ENCODE measurements at regions of chr14 and their contacts with region 1.

Region 1: GRCh38 chr14:98957211-98958047 is 314.6 kb downstream of the BCL11B start:
- DNase-seq: peak; percentile 59 to 92
- H3K4me3 ChIP-seq: no peak overlapping the region
- H3K27ac ChIP-seq: peak overlapping the region; percentile 19 to 29
- H3K4me1 ChIP-seq: peaks cover 0 to 3% of the 10 kb centered on the region in 2 donors
- H3K27me3 ChIP-seq: no peaks in the 10 kb centered on the region
- CTCF ChIP-seq: no peak

Region 2: GRCh38 chr14:98919434-98919833 is 38.0 kb before region 1 on chr14:
- intact Hi-C with region 1: no loop called
- DNase-seq: no peak
- H3K4me3 ChIP-seq: no peak overlapping the region
- H3K27ac ChIP-seq: no peak overlapping the region
- H3K4me1 ChIP-seq: no peaks in the 10 kb centered on the region
- H3K27me3 ChIP-seq: no peaks in the 10 kb centered on the region
- CTCF ChIP-seq: no peak

Region 3: GRCh38 chr14:99155173-99156089 is 198.0 kb after region 1 on chr14:
- intact Hi-C with region 1: loop called (anchors 5 kb)
- DNase-seq: peak in 1 of 2 donors; percentile 73
- H3K4me3 ChIP-seq: no peak overlapping the region
- H3K27ac ChIP-seq: no peak overlapping the region
- H3K4me1 ChIP-seq: peaks cover 4 to 10% of the 10 kb centered on the region in 2 donors
- H3K27me3 ChIP-seq: no peaks in the 10 kb centered on the region
- CTCF ChIP-seq: no peak

Measured in ascending aorta (tissue), 2 donors.